K562 (cell line): ENCODE measurements at regions of chr2 and their contacts with region 1.

Region 1: GRCh38 chr2:96024336-96025193 is 10.2 kb downstream of the GPAT2 start:
- DNase-seq: peak in 2 of 4 experiments; percentile 8
- ATAC-seq: 0 out of 3 replicates have a peak, but pooled peaks have one; percentile 9
- H3K4me3 ChIP-seq: no peak overlapping the region
- H3K27ac ChIP-seq: no peak overlapping the region
- H3K4me1 ChIP-seq: peaks cover 0 to 13% of the 10 kb centered on the region in 2 experiments; a peak in 2 of 5 replicates
- H3K27me3 ChIP-seq: no peaks in the 10 kb centered on the region; a peak in 1 of 5 replicates
- CTCF ChIP-seq: no peak
- EP300 ChIP-seq: no peak
- POLR2A ChIP-seq: no peak
- RAD21 ChIP-seq: no peak

Region 2: GRCh38 chr2:95314964-95315611 is 709.5 kb before region 1 on chr2:
- CTCF ChIA-PET with region 1: no interaction called
- POLR2A ChIA-PET with region 1: no interaction called
- in situ Hi-C with region 1: no loop called
- intact Hi-C with region 1: no loop called
- DNase-seq: peak; percentile 34 to 48 (median 45)
- ATAC-seq: peak; percentile 79
- H3K4me3 ChIP-seq: no peak overlapping the region
- H3K27ac ChIP-seq: no peak overlapping the region
- H3K4me1 ChIP-seq: peaks cover 0 to 5% of the 10 kb centered on the region in 2 experiments; a peak in 1 of 5 replicates
- H3K27me3 ChIP-seq: peaks cover 6 to 76% of the 10 kb centered on the region in 2 experiments; a peak in 4 of 5 replicates
- CTCF ChIP-seq: peak; percentile 60 to 66 (median 62)
- EP300 ChIP-seq: no peak
- POLR2A ChIP-seq: no peak
- RAD21 ChIP-seq: peak; percentile 28 to 65; a peak in 2 of 4 replicates

Region 3: DNA sequence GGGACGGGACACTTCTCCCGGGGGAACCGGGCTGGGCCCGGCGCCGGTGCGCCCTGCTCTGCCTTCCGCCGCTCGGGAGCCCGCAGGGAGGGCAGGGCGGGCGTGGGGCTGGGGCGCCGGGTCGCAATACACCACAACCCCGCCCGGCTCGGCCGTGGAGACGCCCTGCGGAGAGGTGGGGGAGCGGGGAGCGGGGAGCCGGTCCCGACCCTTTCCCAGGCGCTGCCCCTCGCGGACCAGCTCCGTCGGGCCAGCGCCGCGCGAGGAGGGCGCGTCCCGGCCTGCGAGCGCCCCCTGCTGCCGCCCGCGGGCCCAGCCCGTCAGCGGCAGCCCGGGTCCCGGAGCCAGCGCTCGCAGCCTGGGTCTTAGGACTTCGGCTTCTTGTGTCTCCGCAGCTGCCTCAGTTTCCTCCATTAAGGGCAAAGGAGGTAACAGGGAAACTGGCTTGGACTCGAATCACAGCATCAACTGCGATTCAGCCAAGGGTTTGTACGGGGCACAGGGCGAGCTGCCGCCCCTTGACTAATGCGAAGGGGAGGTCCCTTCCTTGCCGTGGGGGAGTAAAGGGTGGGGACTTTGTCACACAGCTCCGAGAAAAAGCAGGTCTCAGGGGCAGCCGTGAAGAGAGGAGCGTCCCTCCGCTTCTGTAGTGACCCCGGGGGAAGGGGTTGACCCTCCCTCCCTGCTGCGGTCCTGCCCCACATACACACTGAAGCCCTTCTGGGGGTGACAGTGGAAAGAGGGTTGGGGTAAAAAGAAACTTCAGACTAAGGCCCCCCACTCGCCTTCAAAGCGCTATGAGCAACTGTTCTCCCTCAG is 92.5 kb after region 1 on chr2:
- CTCF ChIA-PET with region 1: interaction called, 12 read pairs
- POLR2A ChIA-PET with region 1: no interaction called
- in situ Hi-C with region 1: loop called (anchors 5 kb)
- intact Hi-C with region 1: no loop called
- DNase-seq: peak; percentile 70 to 93 (median 92)
- ATAC-seq: peak; percentile 94
- H3K4me3 ChIP-seq: peak overlapping the region; percentile 46
- H3K27ac ChIP-seq: no peak overlapping the region
- H3K4me1 ChIP-seq: peaks cover 3 to 47% of the 10 kb centered on the region in 2 experiments; a peak in 4 of 5 replicates
- H3K27me3 ChIP-seq: peaks cover 14 to 84% of the 10 kb centered on the region in 2 experiments; a peak in 4 of 5 replicates
- CTCF ChIP-seq: peak; percentile 66 to 93 (median 79)
- EP300 ChIP-seq: no peak
- POLR2A ChIP-seq: no peak
- RAD21 ChIP-seq: peak; percentile 80 to 93

Region 4: DNA sequence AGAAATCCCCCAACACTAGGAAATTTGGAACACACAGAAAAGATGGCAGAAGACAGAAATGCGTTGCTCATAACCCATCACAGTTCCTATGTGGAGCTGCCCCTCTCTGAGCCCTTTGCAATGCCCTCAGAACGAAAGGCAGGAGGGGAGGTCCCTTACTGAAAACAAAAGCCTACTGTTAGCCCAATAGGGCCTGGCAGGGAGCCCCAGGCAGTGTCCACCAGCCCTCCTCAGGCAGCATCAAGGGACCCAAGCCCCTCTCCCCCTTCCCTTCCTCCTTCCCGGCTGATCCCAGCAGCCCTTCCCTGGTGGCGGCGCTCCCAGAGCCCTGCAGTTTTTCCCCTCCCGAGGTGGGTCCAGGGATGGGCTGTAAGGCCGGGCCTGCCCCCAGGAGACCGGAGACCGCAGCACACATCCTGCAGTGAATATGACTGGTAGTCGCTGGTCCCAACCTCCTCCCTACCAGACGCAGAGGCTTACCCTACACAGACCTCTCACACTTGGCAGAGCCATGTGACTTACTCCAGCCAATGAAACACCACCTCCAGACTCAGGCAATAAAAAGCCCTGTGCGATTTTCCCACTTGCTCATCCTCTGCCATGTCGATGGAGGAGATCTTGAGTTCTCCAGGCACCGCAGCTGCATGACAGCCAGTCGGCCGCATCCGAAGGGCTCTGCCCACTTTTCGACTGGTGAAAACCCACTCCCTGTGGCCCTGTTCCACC is 140.1 kb after region 1 on chr2:
- CTCF ChIA-PET with region 1: no interaction called
- POLR2A ChIA-PET with region 1: no interaction called
- in situ Hi-C with region 1: no loop called
- intact Hi-C with region 1: no loop called
- DNase-seq: no peak
- ATAC-seq: peak; percentile 82
- H3K4me3 ChIP-seq: no peak overlapping the region
- H3K27ac ChIP-seq: no peak overlapping the region
- H3K4me1 ChIP-seq: peaks cover 5 to 17% of the 10 kb centered on the region in 2 experiments
- H3K27me3 ChIP-seq: no peaks in the 10 kb centered on the region
- CTCF ChIP-seq: no peak
- EP300 ChIP-seq: no peak
- POLR2A ChIP-seq: no peak
- RAD21 ChIP-seq: no peak

Region 5: GRCh38 chr2:96233880-96234316 is 209.3 kb after region 1 on chr2:
- CTCF ChIA-PET with region 1: no interaction called
- POLR2A ChIA-PET with region 1: no interaction called
- in situ Hi-C with region 1: no loop called
- intact Hi-C with region 1: no loop called
- DNase-seq: peak in 1 of 4 experiments; percentile 7
- ATAC-seq: peak; percentile 53
- H3K4me3 ChIP-seq: no peak overlapping the region
- H3K27ac ChIP-seq: no peak overlapping the region
- H3K4me1 ChIP-seq: no peaks in the 10 kb centered on the region
- H3K27me3 ChIP-seq: no peaks in the 10 kb centered on the region
- CTCF ChIP-seq: peak in 1 of 3 experiments; percentile 47; a peak in 2 of 6 replicates
- EP300 ChIP-seq: no peak
- POLR2A ChIP-seq: no peak
- RAD21 ChIP-seq: no peak

Region 6: GRCh38 chr2:96951093-96951654 is 926.6 kb after region 1 on chr2:
- CTCF ChIA-PET with region 1: no interaction called
- POLR2A ChIA-PET with region 1: no interaction called
- in situ Hi-C with region 1: no loop called
- intact Hi-C with region 1: no loop called
- DNase-seq: peak; percentile 86 to 90 (median 87)
- ATAC-seq: peak; percentile 98
- H3K4me3 ChIP-seq: no peak overlapping the region
- H3K27ac ChIP-seq: no peak overlapping the region
- H3K4me1 ChIP-seq: peaks cover 46 to 57% of the 10 kb centered on the region in 2 experiments; a peak in 4 of 5 replicates
- H3K27me3 ChIP-seq: no peaks in the 10 kb centered on the region
- CTCF ChIP-seq: peak; percentile 91 to 96 (median 94)
- EP300 ChIP-seq: no peak
- POLR2A ChIP-seq: no peak
- RAD21 ChIP-seq: peak; percentile 95 to 98